GM12878 (cell line): ENCODE measurements at regions of chr20 and their contacts with region 1.

Region 1: DNA sequence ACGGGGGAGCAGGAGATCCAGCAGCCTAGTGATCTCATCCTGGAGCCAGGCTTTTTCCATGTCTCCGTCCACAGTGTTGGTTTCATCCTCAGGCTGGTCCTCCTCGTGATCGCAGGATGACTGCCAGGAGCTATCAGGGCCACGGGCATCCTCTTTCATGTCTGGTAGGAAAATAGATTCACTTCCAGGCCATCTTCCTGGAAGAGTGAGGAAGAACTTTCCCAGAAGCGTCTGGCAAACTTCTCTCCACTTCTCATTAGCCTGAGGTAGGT is 15.3 kb upstream of the SLC9A8 start:
- DNase-seq: no peak
- ATAC-seq: no peak
- H3K4me3 ChIP-seq: no peak overlapping the region
- H3K27ac ChIP-seq: no peak overlapping the region
- H3K4me1 ChIP-seq: peaks cover 18% of the 10 kb centered on the region
- H3K27me3 ChIP-seq: no peaks in the 10 kb centered on the region
- CTCF ChIP-seq: no peak
- EP300 ChIP-seq: no peak
- POLR2A ChIP-seq: no peak
- RAD21 ChIP-seq: no peak

Region 2: GRCh38 chr20:49631061-49631788 is 166.1 kb before region 1 on chr20:
- CTCF ChIA-PET with region 1: interaction called, 3 read pairs
- POLR2A ChIA-PET with region 1: interaction called, 4 read pairs
- RAD21 ChIA-PET with region 1: interaction called, 13 read pairs
- SMC1A ChIA-PET with region 1: interaction called, 10 read pairs
- in situ Hi-C with region 1: no loop called
- intact Hi-C with region 1: no loop called
- DNase-seq: no peak
- ATAC-seq: peak; percentile 75
- H3K4me3 ChIP-seq: no peak overlapping the region
- H3K27ac ChIP-seq: peak overlapping the region; percentile 77
- H3K4me1 ChIP-seq: peaks cover 53% of the 10 kb centered on the region
- H3K27me3 ChIP-seq: no peaks in the 10 kb centered on the region
- CTCF ChIP-seq: no peak
- EP300 ChIP-seq: peak in 1 of 2 experiments; percentile 39; a peak in 1 of 4 replicates
- POLR2A ChIP-seq: no peak; the same call in 1 of the 2 replicates
- RAD21 ChIP-seq: no peak

Region 3: DNA sequence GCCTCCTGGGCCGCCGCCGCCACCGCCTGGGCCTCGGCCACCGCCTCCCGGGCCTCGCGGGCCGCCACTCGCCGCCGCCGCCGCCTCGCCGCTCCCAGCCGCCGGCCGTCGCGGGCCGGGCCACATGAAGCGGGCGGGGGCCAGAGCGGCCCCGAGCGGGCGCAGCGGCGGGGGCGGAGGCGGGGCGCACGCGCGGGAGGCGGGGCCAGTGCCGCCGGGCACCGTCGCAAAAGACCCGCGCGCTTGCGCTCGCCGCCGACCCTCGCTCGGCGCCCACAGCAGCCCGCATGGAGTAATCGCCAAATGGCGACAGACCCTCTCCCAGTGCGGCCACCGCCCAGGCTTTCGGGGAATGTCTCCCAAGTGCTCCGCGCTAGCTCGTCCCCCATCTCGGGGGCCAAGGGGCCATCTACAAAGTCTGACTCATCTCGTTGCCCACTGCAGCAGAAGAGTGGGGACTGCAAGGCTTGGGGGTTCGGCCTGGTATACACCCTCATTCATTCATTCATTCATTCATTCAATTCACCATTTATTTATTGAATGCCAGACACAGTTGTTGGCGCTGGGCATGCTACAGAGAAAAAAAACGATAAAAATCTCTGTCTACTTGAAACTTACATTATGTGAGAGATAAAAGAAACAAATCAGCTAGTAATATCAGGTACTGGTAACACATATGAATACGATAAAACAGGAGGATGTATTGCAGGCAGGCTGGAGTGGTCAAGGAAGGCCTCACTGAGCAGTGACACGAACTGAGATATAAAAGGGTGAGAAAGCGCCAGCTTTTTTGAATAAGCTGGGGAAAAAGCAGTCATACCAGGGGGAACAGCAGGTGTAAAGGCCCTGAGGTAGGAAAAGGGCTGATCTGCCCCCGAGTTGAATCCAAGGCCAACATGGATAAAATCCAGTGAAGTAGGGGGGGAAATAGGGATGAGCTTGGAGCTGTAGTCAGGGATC is 83.2 kb before region 1 on chr20 and contains the start of gene B4GALT5:
- CTCF ChIA-PET with region 1: interaction called, 7 read pairs
- POLR2A ChIA-PET with region 1: interaction called, 6 read pairs
- RAD21 ChIA-PET with region 1: interaction called, 12 read pairs
- SMC1A ChIA-PET with region 1: interaction called, 17 read pairs
- in situ Hi-C with region 1: no loop called
- intact Hi-C with region 1: loop called (anchors 5 kb)
- DNase-seq: no peak
- ATAC-seq: peak; percentile 76
- H3K4me3 ChIP-seq: peak within 1 kb of the TSS; percentile 97
- H3K27ac ChIP-seq: peak within 1 kb of the TSS; percentile 80
- H3K4me1 ChIP-seq: peaks cover 5% of the 10 kb centered on the region; the same call in 1 of the 2 replicates
- H3K27me3 ChIP-seq: no peaks in the 10 kb centered on the region
- CTCF ChIP-seq: no peak
- EP300 ChIP-seq: no peak
- POLR2A ChIP-seq: no peak
- RAD21 ChIP-seq: no peak
- polyA plus RNA-seq, gene B4GALT5: 10.0 to 15.3 TPM

Region 4: DNA sequence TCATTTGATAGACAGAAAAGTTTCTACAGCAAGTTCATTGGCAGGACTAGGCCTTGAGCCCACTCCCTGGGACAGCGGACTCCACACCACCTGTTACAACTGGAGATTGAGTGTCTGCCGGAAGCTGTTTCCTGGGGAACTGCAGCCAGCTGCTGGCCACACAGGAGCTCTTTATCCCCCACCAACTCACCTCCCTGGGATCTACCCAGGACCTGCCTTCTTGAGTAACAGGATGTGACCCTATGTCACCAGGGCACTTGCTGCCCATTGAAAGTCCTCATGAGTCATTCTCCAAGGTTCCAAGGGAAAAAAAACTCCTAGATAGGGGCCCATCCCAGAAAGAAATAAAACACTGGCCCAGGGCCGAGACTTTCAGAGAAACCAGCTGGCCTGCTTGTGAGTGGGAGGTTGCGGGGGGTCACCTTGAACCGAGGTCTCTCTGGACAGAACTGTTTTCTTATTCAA is 22.0 kb before region 1 on chr20:
- CTCF ChIA-PET with region 1: interaction called, 3 read pairs
- POLR2A ChIA-PET with region 1: interaction called, 9 read pairs
- RAD21 ChIA-PET with region 1: interaction called, 23 read pairs
- SMC1A ChIA-PET with region 1: interaction called, 6 read pairs
- in situ Hi-C with region 1: no loop called
- intact Hi-C with region 1: no loop called
- DNase-seq: no peak
- ATAC-seq: no peak
- H3K4me3 ChIP-seq: no peak overlapping the region
- H3K27ac ChIP-seq: no peak overlapping the region
- H3K4me1 ChIP-seq: peaks cover 11% of the 10 kb centered on the region; the same call in 1 of the 2 replicates
- H3K27me3 ChIP-seq: no peaks in the 10 kb centered on the region
- CTCF ChIP-seq: no peak
- EP300 ChIP-seq: no peak
- POLR2A ChIP-seq: no peak
- RAD21 ChIP-seq: no peak

Region 5: GRCh38 chr20:49812463-49813304 is 15.4 kb after region 1 on chr20 and contains the start of gene SLC9A8:
- CTCF ChIA-PET with region 1: interaction called, 6 read pairs
- POLR2A ChIA-PET with region 1: interaction called, 18 read pairs
- RAD21 ChIA-PET with region 1: interaction called, 11 read pairs
- SMC1A ChIA-PET with region 1: interaction called, 8 read pairs
- in situ Hi-C with region 1: no loop called
- intact Hi-C with region 1: loop called (anchors 1 kb)
- DNase-seq: peak; percentile 78
- ATAC-seq: peak; percentile 93
- H3K4me3 ChIP-seq: peak within 1 kb of the TSS; percentile 76
- H3K27ac ChIP-seq: peak within 1 kb of the TSS; percentile 78
- H3K4me1 ChIP-seq: peaks cover 6% of the 10 kb centered on the region
- H3K27me3 ChIP-seq: no peaks in the 10 kb centered on the region
- CTCF ChIP-seq: peak; percentile 10 to 44 (median 36); a peak in 3 of 6 replicates
- EP300 ChIP-seq: peak in 1 of 2 experiments; percentile 7; a peak in 1 of 4 replicates
- POLR2A ChIP-seq: peak; percentile 85
- RAD21 ChIP-seq: no peak
- polyA plus RNA-seq, gene SLC9A8: 0.40 to 0.53 TPM